ENCODE measurements at regions of chr6 and their contacts with region 1.

Region 1: GRCh38 chr6:104771258-104771832 is 88.4 kb downstream of the HACE1 start:
- DNase-seq: no peak
- H3K4me3 ChIP-seq: no peak overlapping the region
- H3K27ac ChIP-seq: no peak overlapping the region
- H3K4me1 ChIP-seq: no peaks in the 10 kb centered on the region
- H3K27me3 ChIP-seq: no peaks in the 10 kb centered on the region
- CTCF ChIP-seq: peak; percentile 85

Region 2: GRCh38 chr6:104525677-104526312 is 245.6 kb before region 1 on chr6:
- CTCF ChIA-PET with region 1: interaction called, 3 read pairs
- POLR2A ChIA-PET with region 1: no interaction called
- intact Hi-C with region 1: loop called (anchors 2 kb)
- DNase-seq: peak; percentile 58 to 62
- H3K4me3 ChIP-seq: no peak overlapping the region
- H3K27ac ChIP-seq: no peak overlapping the region
- H3K4me1 ChIP-seq: no peaks in the 10 kb centered on the region
- H3K27me3 ChIP-seq: no peaks in the 10 kb centered on the region
- CTCF ChIP-seq: peak; percentile 99

Region 3: GRCh38 chr6:104754788-104755409 is 16.4 kb before region 1 on chr6:
- CTCF ChIA-PET with region 1: no interaction called
- POLR2A ChIA-PET with region 1: no interaction called
- intact Hi-C with region 1: no loop called
- DNase-seq: no peak
- H3K4me3 ChIP-seq: no peak overlapping the region
- H3K27ac ChIP-seq: no peak overlapping the region
- H3K4me1 ChIP-seq: no peaks in the 10 kb centered on the region
- H3K27me3 ChIP-seq: no peaks in the 10 kb centered on the region
- CTCF ChIP-seq: no peak

Measured in PC-9 (cell line).